Body of pancreas (tissue), 4 donors: ENCODE measurements at regions of chr9 and their contacts with region 1.

Region 1: GRCh38 chr9:5278486-5278885 is 26.0 kb downstream of the RLN2 start:
- DNase-seq: no peak
- ATAC-seq: no peak
- H3K4me3 ChIP-seq: no peak overlapping the region
- H3K27ac ChIP-seq: no peak overlapping the region
- H3K4me1 ChIP-seq: no peaks in the 10 kb centered on the region
- H3K27me3 ChIP-seq: peaks cover 0 to 3% of the 10 kb centered on the region in 2 donors
- CTCF ChIP-seq: no peak
- POLR2A ChIP-seq: no peak

Region 2: GRCh38 chr9:5186416-5187169 is 91.9 kb before region 1 on chr9:
- intact Hi-C with region 1: no loop called
- DNase-seq: peak; percentile 60 to 76 (median 68)
- ATAC-seq: peak; percentile 81
- H3K4me3 ChIP-seq: no peak overlapping the region
- H3K27ac ChIP-seq: no peak overlapping the region
- H3K4me1 ChIP-seq: no peaks in the 10 kb centered on the region
- H3K27me3 ChIP-seq: no peaks in the 10 kb centered on the region
- CTCF ChIP-seq: peak; percentile 31 to 87 (median 70)
- POLR2A ChIP-seq: no peak

Region 3: DNA sequence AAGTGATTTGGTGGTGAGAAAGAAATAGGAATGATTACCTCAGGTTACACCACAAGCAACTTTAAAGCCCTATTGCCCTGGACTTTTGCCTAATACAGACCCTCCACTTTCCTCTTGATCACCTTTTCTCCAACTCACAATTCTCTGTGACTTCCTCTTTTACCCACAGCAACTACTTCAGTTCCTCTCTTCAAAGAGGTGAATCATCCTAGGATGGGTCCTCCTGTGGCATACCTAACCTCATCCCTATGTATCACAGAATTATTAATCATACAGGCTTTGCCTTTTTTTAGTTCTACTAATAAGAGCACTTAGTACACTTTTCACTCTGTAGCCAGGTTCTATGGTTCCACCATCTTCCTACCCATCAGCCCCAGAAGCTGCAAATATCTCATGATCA is 73.4 kb before region 1 on chr9:
- intact Hi-C with region 1: loop called (anchors 10 kb)
- DNase-seq: no peak
- ATAC-seq: no peak
- H3K4me3 ChIP-seq: no peak overlapping the region
- H3K27ac ChIP-seq: no peak overlapping the region
- H3K4me1 ChIP-seq: no peaks in the 10 kb centered on the region
- H3K27me3 ChIP-seq: no peaks in the 10 kb centered on the region
- CTCF ChIP-seq: no peak
- POLR2A ChIP-seq: no peak

Region 4: GRCh38 chr9:5336688-5337087 is 58.2 kb after region 1 on chr9:
- intact Hi-C with region 1: no loop called
- DNase-seq: no peak
- ATAC-seq: no peak
- H3K4me3 ChIP-seq: no peak overlapping the region
- H3K27ac ChIP-seq: no peak overlapping the region
- H3K4me1 ChIP-seq: no peaks in the 10 kb centered on the region
- H3K27me3 ChIP-seq: no peaks in the 10 kb centered on the region
- CTCF ChIP-seq: no peak
- POLR2A ChIP-seq: no peak

Region 5: GRCh38 chr9:5382479-5382878 is 104.0 kb after region 1 on chr9:
- intact Hi-C with region 1: no loop called
- DNase-seq: no peak
- ATAC-seq: no peak
- H3K4me3 ChIP-seq: no peak overlapping the region
- H3K27ac ChIP-seq: no peak overlapping the region
- H3K4me1 ChIP-seq: no peaks in the 10 kb centered on the region
- H3K27me3 ChIP-seq: no peaks in the 10 kb centered on the region
- CTCF ChIP-seq: no peak
- POLR2A ChIP-seq: no peak

Region 6: GRCh38 chr9:5608298-5609225 is 330.1 kb after region 1 on chr9:
- intact Hi-C with region 1: no loop called
- DNase-seq: peak in 1 of 4 donors; percentile 19
- ATAC-seq: peak; percentile 59
- H3K4me3 ChIP-seq: no peak overlapping the region
- H3K27ac ChIP-seq: peak overlapping the region in 2 of 4 donors; percentile 0 to 37
- H3K4me1 ChIP-seq: no peaks in the 10 kb centered on the region
- H3K27me3 ChIP-seq: no peaks in the 10 kb centered on the region
- CTCF ChIP-seq: peak in 1 of 7 experiments; percentile 15
- POLR2A ChIP-seq: no peak